ENCODE measurements at regions of chr1 and their contacts with region 1.

Region 1: DNA sequence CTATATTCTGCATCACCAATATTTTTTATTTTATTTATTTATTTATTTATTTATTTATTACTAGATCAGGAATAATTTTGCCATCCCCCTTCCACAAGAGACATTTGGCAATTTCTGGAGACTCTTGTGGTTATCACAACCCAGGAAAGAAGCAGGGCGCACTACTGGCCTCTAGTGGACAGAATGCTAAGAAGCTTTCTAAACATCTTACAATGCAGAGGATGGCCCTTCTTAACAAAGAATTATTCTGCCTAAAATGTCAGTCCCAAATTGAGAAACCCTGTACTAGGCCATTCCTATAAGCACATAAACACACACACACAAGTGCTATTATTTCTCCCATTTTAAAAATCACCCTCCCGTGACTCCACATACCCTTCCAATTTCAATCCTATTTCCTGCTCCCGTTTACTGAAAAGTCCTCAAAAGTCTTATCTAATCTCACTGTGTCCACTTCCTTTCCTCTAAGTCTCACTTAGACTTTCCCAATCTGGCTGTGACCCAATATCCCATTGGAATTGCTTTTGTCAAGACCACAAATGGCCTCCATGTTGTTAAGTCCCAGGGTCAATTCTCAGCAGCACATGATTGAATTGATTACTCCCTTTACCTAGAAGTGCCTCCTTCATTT is 43.7 kb upstream of the RNF11 start:
- DNase-seq: peak; percentile 9 to 76
- H3K4me3 ChIP-seq: no peak overlapping the region
- H3K27ac ChIP-seq: no peak overlapping the region
- H3K4me1 ChIP-seq: no peaks in the 10 kb centered on the region
- H3K27me3 ChIP-seq: no peaks in the 10 kb centered on the region
- CTCF ChIP-seq: peak in 2 of 3 experiments; percentile 70 to 77; a peak in 3 of 4 replicates
- EP300 ChIP-seq: no peak
- POLR2A ChIP-seq: no peak
- RAD21 ChIP-seq: peak; percentile 63 to 73

Region 2: GRCh38 chr1:50774759-50775351 is 417.5 kb before region 1 on chr1:
- CTCF ChIA-PET with region 1: interaction called, 54 read pairs
- POLR2A ChIA-PET with region 1: no interaction called
- DNase-seq: no peak
- H3K4me3 ChIP-seq: no peak overlapping the region
- H3K27ac ChIP-seq: no peak overlapping the region
- H3K4me1 ChIP-seq: no peaks in the 10 kb centered on the region
- H3K27me3 ChIP-seq: no peaks in the 10 kb centered on the region
- CTCF ChIP-seq: peak in 2 of 3 experiments; percentile 41 to 65; a peak in 2 of 4 replicates
- EP300 ChIP-seq: no peak
- POLR2A ChIP-seq: no peak
- RAD21 ChIP-seq: peak; percentile 73 to 79

Region 3: DNA sequence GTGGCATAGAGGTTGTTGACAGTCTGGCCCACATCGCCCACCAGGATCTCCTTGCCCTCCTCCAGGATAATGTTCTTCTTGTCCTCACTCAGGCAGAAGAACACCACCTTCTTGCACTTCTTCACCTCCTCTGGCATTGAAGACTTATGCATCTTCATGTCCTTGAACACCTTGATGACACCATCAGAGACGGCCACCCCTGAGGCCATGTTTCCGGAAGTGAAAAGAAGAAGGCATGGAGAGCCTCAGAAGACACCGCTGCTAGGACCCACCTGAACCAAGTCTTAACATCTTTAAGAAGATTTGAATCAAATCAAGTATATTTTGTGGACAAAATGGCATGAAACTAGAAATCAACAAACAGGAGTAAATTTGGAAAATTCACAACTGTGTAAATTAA is 34.1 kb before region 1 on chr1:
- CTCF ChIA-PET with region 1: interaction called, 10 read pairs
- POLR2A ChIA-PET with region 1: no interaction called
- DNase-seq: no peak
- H3K4me3 ChIP-seq: no peak overlapping the region
- H3K27ac ChIP-seq: no peak overlapping the region
- H3K4me1 ChIP-seq: no peaks in the 10 kb centered on the region
- H3K27me3 ChIP-seq: no peaks in the 10 kb centered on the region
- CTCF ChIP-seq: no peak
- EP300 ChIP-seq: no peak
- POLR2A ChIP-seq: no peak
- RAD21 ChIP-seq: no peak

Region 4: GRCh38 chr1:51203121-51203873 is 11.0 kb after region 1 on chr1:
- CTCF ChIA-PET with region 1: interaction called, 14 read pairs
- POLR2A ChIA-PET with region 1: no interaction called
- DNase-seq: no peak
- H3K4me3 ChIP-seq: no peak overlapping the region
- H3K27ac ChIP-seq: no peak overlapping the region
- H3K4me1 ChIP-seq: no peaks in the 10 kb centered on the region
- H3K27me3 ChIP-seq: no peaks in the 10 kb centered on the region
- CTCF ChIP-seq: no peak
- EP300 ChIP-seq: no peak
- POLR2A ChIP-seq: no peak
- RAD21 ChIP-seq: no peak

Region 5: GRCh38 chr1:51296383-51297357 is 104.3 kb after region 1 on chr1:
- CTCF ChIA-PET with region 1: interaction called, 39 read pairs
- POLR2A ChIA-PET with region 1: no interaction called
- DNase-seq: peak; percentile 83 to 99
- H3K4me3 ChIP-seq: no peak overlapping the region
- H3K27ac ChIP-seq: no peak overlapping the region
- H3K4me1 ChIP-seq: peaks cover 0 to 7% (median 5%) of the 10 kb centered on the region in 4 experiments; a peak in 5 of 7 replicates
- H3K27me3 ChIP-seq: no peaks in the 10 kb centered on the region; a peak in 1 of 7 replicates
- CTCF ChIP-seq: peak; percentile 89 to 93 (median 90)
- EP300 ChIP-seq: 0 out of 3 replicates have a peak, but pooled peaks of 1 of the 2 experiments have one; percentile 46
- POLR2A ChIP-seq: no peak
- RAD21 ChIP-seq: peak; percentile 86 to 94

Measured in H1 (cell line).